ENCODE measurements at regions of chrX and their contacts with region 1.

Region 1: GRCh38 chrX:69285881-69286564 is 120.8 kb upstream of the PJA1 start:
- DNase-seq: peak; percentile 76
- H3K4me3 Mint-ChIP-seq: peak overlapping the region; percentile 26
- H3K27ac Mint-ChIP-seq: no peak overlapping the region
- H3K4me1 Mint-ChIP-seq: peaks cover 4% of the 10 kb centered on the region
- H3K27me3 Mint-ChIP-seq: peaks cover 8% of the 10 kb centered on the region
- CTCF ChIP-seq: peak; percentile 87

Region 2: GRCh38 chrX:68822641-68823410 is 463.2 kb before region 1 on chrX:
- CTCF ChIA-PET with region 1: interaction called, 8 read pairs
- intact Hi-C with region 1: loop called (anchors 1 kb)
- DNase-seq: peak; percentile 46
- H3K4me3 Mint-ChIP-seq: no peak overlapping the region
- H3K27ac Mint-ChIP-seq: no peak overlapping the region
- H3K4me1 Mint-ChIP-seq: peaks cover 4% of the 10 kb centered on the region
- H3K27me3 Mint-ChIP-seq: peaks cover 24% of the 10 kb centered on the region
- CTCF ChIP-seq: peak; percentile 29

Region 3: GRCh38 chrX:69070949-69071650 is 214.9 kb before region 1 on chrX:
- CTCF ChIA-PET with region 1: no interaction called
- intact Hi-C with region 1: no loop called
- DNase-seq: no peak
- H3K4me3 Mint-ChIP-seq: no peak overlapping the region
- H3K27ac Mint-ChIP-seq: no peak overlapping the region
- H3K4me1 Mint-ChIP-seq: no peaks in the 10 kb centered on the region
- H3K27me3 Mint-ChIP-seq: peaks cover 8% of the 10 kb centered on the region
- CTCF ChIP-seq: no peak

Region 4: GRCh38 chrX:69158166-69158980 is 127.7 kb before region 1 on chrX:
- CTCF ChIA-PET with region 1: interaction called, 4 read pairs
- intact Hi-C with region 1: loop called (anchors 10 kb)
- DNase-seq: peak; percentile 74
- H3K4me3 Mint-ChIP-seq: no peak overlapping the region
- H3K27ac Mint-ChIP-seq: no peak overlapping the region
- H3K4me1 Mint-ChIP-seq: peaks cover 31% of the 10 kb centered on the region
- H3K27me3 Mint-ChIP-seq: no peaks in the 10 kb centered on the region
- CTCF ChIP-seq: peak; percentile 58

Region 5: GRCh38 chrX:69430785-69431184 is 144.8 kb after region 1 on chrX:
- CTCF ChIA-PET with region 1: no interaction called
- intact Hi-C with region 1: no loop called
- DNase-seq: no peak
- H3K4me3 Mint-ChIP-seq: no peak overlapping the region
- H3K27ac Mint-ChIP-seq: no peak overlapping the region
- H3K4me1 Mint-ChIP-seq: no peaks in the 10 kb centered on the region
- H3K27me3 Mint-ChIP-seq: peaks cover 50% of the 10 kb centered on the region
- CTCF ChIP-seq: no peak